ENCODE measurements at regions of chr1 and their contacts with region 1.

Region 1: GRCh38 chr1:184805667-184806295 is 51.1 kb upstream of the EDEM3 start:
- DNase-seq: peak; percentile 82 to 86
- ATAC-seq: peak; percentile 57 to 82
- H3K4me3 ChIP-seq: no peak overlapping the region
- H3K27ac ChIP-seq: peak overlapping the region; percentile 25 to 90 (median 84)
- H3K4me1 ChIP-seq: peaks cover 38 to 43% of the 10 kb centered on the region in 2 donors
- H3K27me3 ChIP-seq: no peaks in the 10 kb centered on the region
- CTCF ChIP-seq: peak; percentile 90 to 95 (median 93)
- POLR2A ChIP-seq: no peak

Region 2: DNA sequence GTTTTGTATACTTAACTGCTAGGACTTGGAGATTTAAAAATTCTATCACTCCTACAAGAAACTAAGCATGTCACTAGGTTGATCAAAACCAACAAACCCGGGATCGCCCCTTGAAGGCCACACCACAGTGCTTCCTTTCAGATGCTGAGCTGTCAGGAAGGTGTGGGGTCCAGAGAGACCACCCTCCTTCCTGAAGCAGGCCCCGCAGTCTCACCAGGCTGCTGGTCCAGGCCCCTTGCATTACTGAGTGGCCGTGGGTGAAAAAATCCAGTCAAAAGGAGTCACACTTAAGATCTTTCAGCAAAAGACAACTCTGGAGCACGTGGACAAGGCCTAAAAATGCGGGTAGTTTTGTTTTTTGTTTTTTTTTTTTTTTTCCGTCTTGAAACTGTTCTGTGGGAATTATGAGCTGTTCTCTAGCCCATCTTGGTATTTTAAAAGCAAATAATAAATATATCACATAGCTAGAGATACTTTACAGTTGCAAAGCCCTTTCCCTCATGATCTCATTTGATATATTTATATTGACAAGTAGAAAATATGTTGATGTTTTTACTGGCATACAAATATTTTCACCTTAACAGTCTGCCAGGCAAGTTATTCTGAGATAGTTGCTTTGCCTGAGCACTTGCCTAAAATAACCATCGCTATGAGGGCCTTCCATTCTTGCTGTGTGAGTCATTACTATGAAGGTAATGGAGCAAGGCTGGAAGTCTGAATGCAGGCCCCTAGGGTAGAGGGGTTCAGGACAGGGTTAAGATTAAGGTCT is 22.0 kb after region 1 on chr1:
- in situ Hi-C with region 1: no loop called
- intact Hi-C with region 1: loop called (anchors 2 kb)
- DNase-seq: no peak
- ATAC-seq: peak; percentile 71 to 87
- H3K4me3 ChIP-seq: no peak overlapping the region
- H3K27ac ChIP-seq: peak overlapping the region; percentile 73 to 82 (median 81)
- H3K4me1 ChIP-seq: peaks cover 59 to 64% of the 10 kb centered on the region in 2 donors
- H3K27me3 ChIP-seq: no peaks in the 10 kb centered on the region
- CTCF ChIP-seq: no peak
- POLR2A ChIP-seq: no peak

Region 3: GRCh38 chr1:184973272-184974055 is 167.7 kb after region 1 on chr1:
- in situ Hi-C with region 1: loop called in 1 of 4 experiments (anchors 5 kb)
- intact Hi-C with region 1: no loop called
- DNase-seq: peak in 1 of 2 donors; percentile 37
- ATAC-seq: peak; percentile 60 to 79
- H3K4me3 ChIP-seq: peak overlapping the region; percentile 63 to 80 (median 65)
- H3K27ac ChIP-seq: peak overlapping the region; percentile 71 to 81 (median 75)
- H3K4me1 ChIP-seq: peaks cover 0 to 10% of the 10 kb centered on the region in 2 donors
- H3K27me3 ChIP-seq: no peaks in the 10 kb centered on the region
- CTCF ChIP-seq: no peak
- POLR2A ChIP-seq: no peak

Region 4: GRCh38 chr1:185044981-185045813 is 239.4 kb after region 1 on chr1 and contains the start of gene RNF2:
- in situ Hi-C with region 1: no loop called
- intact Hi-C with region 1: loop called (anchors 5 kb)
- DNase-seq: peak; percentile 45 to 67
- ATAC-seq: peak; percentile 79 to 85
- H3K4me3 ChIP-seq: peak within 1 kb of the TSS; percentile 87 to 97 (median 90)
- H3K27ac ChIP-seq: peak within 1 kb of the TSS; percentile 84 to 94 (median 92)
- H3K4me1 ChIP-seq: peaks cover 22 to 25% of the 10 kb centered on the region in 2 donors
- H3K27me3 ChIP-seq: no peaks in the 10 kb centered on the region
- CTCF ChIP-seq: no peak
- POLR2A ChIP-seq: peak; percentile 42 to 57
- total RNA-seq, gene RNF2: 5.4 to 11.0 (median 7.3) TPM

Measured in gastrocnemius medialis (tissue), 4 donors.